ENCODE measurements at regions of chr4 and their contacts with region 1.

Region 1: GRCh38 chr4:24980064-24980690 is 50.6 kb downstream of the LGI2 start:
- DNase-seq: peak; percentile 90
- H3K4me3 ChIP-seq: peak overlapping the region in 2 of 3 experiments; percentile 2 to 53
- H3K27ac ChIP-seq: peak overlapping the region; percentile 91
- H3K4me1 ChIP-seq: peaks cover 17% of the 10 kb centered on the region
- H3K27me3 ChIP-seq: peaks cover 0 to 2% of the 10 kb centered on the region in 2 experiments
- CTCF ChIP-seq: peak; percentile 82 to 85
- POLR2A ChIP-seq: peak; percentile 8

Region 2: DNA sequence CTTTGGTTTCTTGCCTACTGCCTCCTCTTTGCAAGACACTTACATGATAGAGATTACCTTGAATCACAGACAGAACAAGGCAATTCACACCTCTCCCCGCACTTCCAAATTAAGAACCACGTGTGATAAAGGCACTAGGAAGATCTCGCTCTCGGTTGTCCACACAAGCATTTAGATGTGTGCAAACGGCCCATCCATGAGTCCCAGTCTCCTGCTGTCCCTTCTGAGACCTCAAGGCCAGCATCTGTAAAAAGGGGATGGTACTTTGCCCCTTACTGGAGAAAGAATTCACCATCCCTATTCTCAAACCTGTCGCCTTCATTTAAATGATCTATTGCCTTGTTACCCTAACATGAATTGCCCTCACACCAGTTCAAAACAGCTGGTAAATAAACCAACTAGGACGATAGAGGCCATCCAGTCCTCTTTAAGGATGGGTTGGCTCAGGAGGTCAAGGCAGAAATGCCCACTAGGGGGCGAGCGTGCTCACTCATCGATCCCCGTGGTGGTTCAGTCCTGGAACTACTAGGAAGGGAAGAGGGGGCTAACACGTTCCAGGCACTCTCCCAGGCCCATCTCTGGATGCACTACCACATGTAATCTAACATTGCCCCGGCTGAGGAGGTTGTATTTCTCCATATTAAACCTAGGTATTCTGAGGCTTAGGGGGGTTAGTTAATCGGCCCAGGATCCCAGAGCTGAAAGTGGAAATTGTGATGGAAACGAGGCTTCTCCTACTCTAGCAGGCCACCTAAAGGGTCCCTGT is 491.6 kb before region 1 on chr4:
- CTCF ChIA-PET with region 1: interaction called, 7 read pairs
- POLR2A ChIA-PET with region 1: no interaction called
- dilution Hi-C with region 1: no loop called
- intact Hi-C with region 1: loop called (anchors 2 kb)
- DNase-seq: peak; percentile 67
- H3K4me3 ChIP-seq: no peak overlapping the region
- H3K27ac ChIP-seq: no peak overlapping the region
- H3K4me1 ChIP-seq: no peaks in the 10 kb centered on the region
- H3K27me3 ChIP-seq: peaks cover 6 to 9% of the 10 kb centered on the region in 2 experiments
- CTCF ChIP-seq: peak; percentile 88 to 90
- POLR2A ChIP-seq: no peak

Region 3: GRCh38 chr4:24576276-24576675 is 403.9 kb before region 1 on chr4:
- CTCF ChIA-PET with region 1: no interaction called
- POLR2A ChIA-PET with region 1: no interaction called
- dilution Hi-C with region 1: no loop called
- intact Hi-C with region 1: no loop called
- DNase-seq: no peak
- H3K4me3 ChIP-seq: no peak overlapping the region
- H3K27ac ChIP-seq: no peak overlapping the region
- H3K4me1 ChIP-seq: peaks cover 2% of the 10 kb centered on the region
- H3K27me3 ChIP-seq: no peaks in the 10 kb centered on the region
- CTCF ChIP-seq: no peak
- POLR2A ChIP-seq: no peak

Region 4: GRCh38 chr4:24736066-24736465 is 244.1 kb before region 1 on chr4:
- CTCF ChIA-PET with region 1: interaction called, 5 read pairs
- POLR2A ChIA-PET with region 1: no interaction called
- dilution Hi-C with region 1: no loop called
- intact Hi-C with region 1: loop called (anchors 1 kb)
- DNase-seq: peak; percentile 40
- H3K4me3 ChIP-seq: no peak overlapping the region
- H3K27ac ChIP-seq: no peak overlapping the region
- H3K4me1 ChIP-seq: no peaks in the 10 kb centered on the region
- H3K27me3 ChIP-seq: no peaks in the 10 kb centered on the region
- CTCF ChIP-seq: peak; percentile 27 to 46
- POLR2A ChIP-seq: no peak

Region 5: GRCh38 chr4:24912252-24913118 is 67.7 kb before region 1 on chr4 and contains the start of gene CCDC149:
- CTCF ChIA-PET with region 1: interaction called, 12 read pairs
- POLR2A ChIA-PET with region 1: no interaction called
- dilution Hi-C with region 1: no loop called
- intact Hi-C with region 1: loop called (anchors 1 kb)
- DNase-seq: peak; percentile 43
- H3K4me3 ChIP-seq: peak within 1 kb of the TSS; percentile 44 to 73 (median 50)
- H3K27ac ChIP-seq: peak within 1 kb of the TSS; percentile 13
- H3K4me1 ChIP-seq: peaks cover 5% of the 10 kb centered on the region
- H3K27me3 ChIP-seq: peaks cover 0 to 2% of the 10 kb centered on the region in 2 experiments
- CTCF ChIP-seq: no peak
- POLR2A ChIP-seq: no peak
- total RNA-seq, gene CCDC149: 11.3 and 12.5 TPM in 2 replicates

Region 6: DNA sequence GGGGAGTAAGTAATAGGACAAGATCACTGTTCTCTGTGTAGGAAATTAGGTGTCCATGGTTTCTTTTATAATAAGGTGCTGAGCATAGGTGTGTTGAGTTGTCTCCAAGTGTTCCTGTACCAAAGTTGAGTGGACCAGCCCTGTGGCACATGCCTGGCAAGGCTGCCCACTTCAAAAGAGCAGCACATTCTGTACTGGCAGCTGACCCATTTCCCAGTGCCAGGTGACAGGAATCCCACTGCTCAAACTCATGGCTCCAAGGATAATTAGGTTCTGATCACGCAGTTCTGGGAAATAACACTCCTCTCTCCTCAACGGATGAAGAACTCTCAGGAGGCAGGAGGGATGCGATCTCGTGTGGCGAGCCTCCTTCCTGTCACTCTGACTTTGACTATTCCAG is 63.4 kb after region 1 on chr4:
- CTCF ChIA-PET with region 1: interaction called, 48 read pairs
- POLR2A ChIA-PET with region 1: no interaction called
- dilution Hi-C with region 1: no loop called
- intact Hi-C with region 1: loop called (anchors 1 kb)
- DNase-seq: no peak
- H3K4me3 ChIP-seq: no peak overlapping the region
- H3K27ac ChIP-seq: no peak overlapping the region
- H3K4me1 ChIP-seq: no peaks in the 10 kb centered on the region
- H3K27me3 ChIP-seq: peaks cover 5 to 18% of the 10 kb centered on the region in 2 experiments
- CTCF ChIP-seq: no peak
- POLR2A ChIP-seq: no peak

Region 7: DNA sequence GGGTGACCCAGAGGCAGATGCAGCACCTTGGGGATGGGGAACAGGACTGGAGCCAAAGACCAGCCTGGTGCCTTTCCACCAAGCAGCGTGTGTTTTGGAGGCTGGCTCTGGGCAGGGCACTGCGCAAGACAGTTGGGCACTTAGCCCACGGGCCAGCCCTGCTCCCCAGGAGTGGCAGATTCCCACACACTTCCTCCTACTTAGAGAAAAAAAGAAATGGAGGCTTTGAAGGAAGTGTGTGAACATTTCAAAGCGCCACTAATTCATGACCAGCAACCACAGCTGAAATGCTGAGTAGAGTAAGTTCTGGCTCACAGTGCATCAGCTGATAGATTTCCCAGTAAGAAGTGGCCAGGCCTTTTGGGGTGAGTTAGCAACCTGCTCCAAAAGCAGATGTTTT is 105.5 kb after region 1 on chr4:
- CTCF ChIA-PET with region 1: no interaction called
- POLR2A ChIA-PET with region 1: no interaction called
- dilution Hi-C with region 1: no loop called
- intact Hi-C with region 1: no loop called
- DNase-seq: no peak
- H3K4me3 ChIP-seq: no peak overlapping the region
- H3K27ac ChIP-seq: no peak overlapping the region
- H3K4me1 ChIP-seq: no peaks in the 10 kb centered on the region
- H3K27me3 ChIP-seq: peaks cover 6 to 22% of the 10 kb centered on the region in 2 experiments
- CTCF ChIP-seq: no peak
- POLR2A ChIP-seq: no peak

Region 8: DNA sequence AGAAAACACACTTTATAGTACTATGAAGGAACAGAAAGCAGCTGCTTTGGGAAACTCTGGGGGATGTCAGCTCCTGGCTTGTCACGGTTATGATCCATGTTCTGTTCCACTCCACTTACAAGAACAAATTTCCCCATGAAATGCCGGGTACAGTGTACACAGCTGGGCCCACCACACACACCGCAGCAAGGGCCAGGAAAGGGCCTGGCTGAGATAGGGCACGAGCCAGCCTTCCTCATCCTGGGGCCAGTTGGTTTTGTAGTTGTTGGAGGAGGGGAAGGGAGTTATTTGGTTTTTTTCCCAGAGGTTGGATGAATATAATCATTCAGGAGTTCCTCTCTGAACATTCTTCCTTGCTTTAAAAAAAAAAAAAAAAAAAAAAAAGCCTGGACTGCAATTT is 123.2 kb after region 1 on chr4:
- CTCF ChIA-PET with region 1: no interaction called
- POLR2A ChIA-PET with region 1: no interaction called
- dilution Hi-C with region 1: no loop called
- intact Hi-C with region 1: no loop called
- DNase-seq: no peak
- H3K4me3 ChIP-seq: no peak overlapping the region
- H3K27ac ChIP-seq: no peak overlapping the region
- H3K4me1 ChIP-seq: no peaks in the 10 kb centered on the region
- H3K27me3 ChIP-seq: peaks cover 0 to 3% of the 10 kb centered on the region in 2 experiments
- CTCF ChIP-seq: no peak
- POLR2A ChIP-seq: no peak

Region 9: DNA sequence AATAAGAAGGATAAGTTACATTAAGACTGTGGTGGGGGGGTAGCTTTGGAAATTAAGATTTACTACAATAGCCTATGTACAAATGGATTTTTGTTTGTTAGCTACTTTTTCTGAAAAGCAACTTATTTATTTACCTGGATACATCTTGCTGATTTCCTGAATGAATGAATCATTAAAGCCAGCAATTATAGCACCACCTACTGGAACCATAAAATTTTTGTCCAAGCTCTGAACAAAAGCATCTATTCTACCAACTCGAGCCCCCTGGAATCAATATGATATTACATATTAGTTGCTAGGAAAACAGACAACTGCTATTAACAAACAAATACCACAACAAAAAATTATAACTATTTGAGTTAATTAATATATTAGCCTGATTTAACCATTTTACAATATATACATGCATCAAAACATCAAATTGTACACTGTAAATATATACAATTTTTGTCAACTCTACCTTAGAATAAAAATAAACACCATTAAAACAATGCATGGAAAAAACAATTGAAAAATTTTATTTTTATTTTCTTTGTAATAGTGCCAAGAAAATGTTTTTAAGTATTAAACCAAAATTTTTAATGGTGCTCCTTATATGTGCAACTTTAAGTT is 164.8 kb after region 1 on chr4:
- CTCF ChIA-PET with region 1: interaction called, 38 read pairs
- POLR2A ChIA-PET with region 1: no interaction called
- dilution Hi-C with region 1: no loop called
- intact Hi-C with region 1: loop called (anchors 2 kb)
- DNase-seq: peak; percentile 61
- H3K4me3 ChIP-seq: no peak overlapping the region
- H3K27ac ChIP-seq: no peak overlapping the region
- H3K4me1 ChIP-seq: no peaks in the 10 kb centered on the region
- H3K27me3 ChIP-seq: no peaks in the 10 kb centered on the region
- CTCF ChIP-seq: peak; percentile 37 to 49
- POLR2A ChIP-seq: no peak

Region 10: DNA sequence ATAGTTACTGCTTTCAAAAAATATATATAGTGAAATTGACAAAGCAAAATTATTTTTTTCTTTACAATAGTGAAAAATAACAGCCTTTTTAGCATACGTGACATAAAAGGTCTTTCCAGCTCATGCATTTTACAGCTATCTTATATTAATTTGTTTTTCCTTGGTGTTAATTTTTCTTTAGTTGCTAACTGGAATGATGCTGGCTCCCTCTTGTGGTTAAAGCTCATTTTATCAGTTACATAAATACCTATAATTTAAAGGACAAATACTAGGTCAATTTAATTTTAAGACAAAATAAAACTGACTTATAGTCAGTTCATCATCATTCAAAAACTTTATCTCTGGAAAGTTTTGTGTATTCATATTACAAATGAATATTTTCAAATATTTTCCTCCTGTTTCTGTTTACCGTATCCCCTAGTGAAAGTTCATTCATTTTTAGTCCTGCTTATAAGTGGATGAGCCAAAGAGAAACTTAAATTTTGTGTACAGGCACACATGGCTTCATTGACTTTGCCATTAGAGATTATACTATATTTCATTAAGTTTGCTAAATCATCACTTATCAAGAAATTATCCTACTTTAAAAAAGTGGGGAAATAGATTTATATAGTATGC is 386.9 kb after region 1 on chr4:
- CTCF ChIA-PET with region 1: interaction called, 38 read pairs
- POLR2A ChIA-PET with region 1: no interaction called
- dilution Hi-C with region 1: no loop called
- intact Hi-C with region 1: loop called (anchors 2 kb)
- DNase-seq: peak; percentile 63
- H3K4me3 ChIP-seq: no peak overlapping the region
- H3K27ac ChIP-seq: no peak overlapping the region
- H3K4me1 ChIP-seq: no peaks in the 10 kb centered on the region
- H3K27me3 ChIP-seq: no peaks in the 10 kb centered on the region
- CTCF ChIP-seq: peak; percentile 24 to 34
- POLR2A ChIP-seq: no peak